Endothelial cell of umbilical vein (primary cell): ENCODE measurements at regions of chr14 and their contacts with region 1.

Region 1: DNA sequence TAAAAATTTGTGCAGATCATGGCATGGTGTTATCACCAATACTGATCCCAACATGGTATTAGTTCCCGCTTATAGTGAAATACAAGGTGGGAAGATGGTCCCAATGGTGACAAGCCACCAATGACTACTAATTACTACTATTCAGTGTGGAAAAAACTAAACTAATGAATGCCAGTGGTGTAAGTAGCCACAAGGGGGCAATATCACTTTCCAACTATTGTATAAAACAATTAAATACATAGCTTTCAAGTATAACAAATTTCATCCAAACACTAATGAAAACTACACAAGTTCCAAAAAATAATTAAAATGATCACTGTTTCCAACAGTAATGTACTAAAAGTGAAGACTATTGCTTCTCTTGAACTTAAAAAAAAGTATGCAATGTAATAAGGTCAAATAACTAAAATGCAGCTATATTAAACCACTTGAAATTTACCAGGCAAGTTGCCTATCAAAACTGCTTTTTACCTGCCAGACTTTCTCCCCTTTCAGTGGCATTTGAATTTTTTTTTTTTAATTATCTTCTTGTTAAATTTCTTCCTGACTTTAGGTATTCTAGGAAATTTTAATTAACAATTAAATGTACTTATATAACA is 58.0 kb downstream of the PAPLN start:
- DNase-seq: peak; percentile 71
- H3K4me3 ChIP-seq: no peak overlapping the region
- H3K27ac ChIP-seq: no peak overlapping the region
- H3K4me1 ChIP-seq: peaks cover 3% of the 10 kb centered on the region
- H3K27me3 ChIP-seq: no peaks in the 10 kb centered on the region
- CTCF ChIP-seq: peak; percentile 48 to 55
- POLR2A ChIP-seq: no peak

Region 2: DNA sequence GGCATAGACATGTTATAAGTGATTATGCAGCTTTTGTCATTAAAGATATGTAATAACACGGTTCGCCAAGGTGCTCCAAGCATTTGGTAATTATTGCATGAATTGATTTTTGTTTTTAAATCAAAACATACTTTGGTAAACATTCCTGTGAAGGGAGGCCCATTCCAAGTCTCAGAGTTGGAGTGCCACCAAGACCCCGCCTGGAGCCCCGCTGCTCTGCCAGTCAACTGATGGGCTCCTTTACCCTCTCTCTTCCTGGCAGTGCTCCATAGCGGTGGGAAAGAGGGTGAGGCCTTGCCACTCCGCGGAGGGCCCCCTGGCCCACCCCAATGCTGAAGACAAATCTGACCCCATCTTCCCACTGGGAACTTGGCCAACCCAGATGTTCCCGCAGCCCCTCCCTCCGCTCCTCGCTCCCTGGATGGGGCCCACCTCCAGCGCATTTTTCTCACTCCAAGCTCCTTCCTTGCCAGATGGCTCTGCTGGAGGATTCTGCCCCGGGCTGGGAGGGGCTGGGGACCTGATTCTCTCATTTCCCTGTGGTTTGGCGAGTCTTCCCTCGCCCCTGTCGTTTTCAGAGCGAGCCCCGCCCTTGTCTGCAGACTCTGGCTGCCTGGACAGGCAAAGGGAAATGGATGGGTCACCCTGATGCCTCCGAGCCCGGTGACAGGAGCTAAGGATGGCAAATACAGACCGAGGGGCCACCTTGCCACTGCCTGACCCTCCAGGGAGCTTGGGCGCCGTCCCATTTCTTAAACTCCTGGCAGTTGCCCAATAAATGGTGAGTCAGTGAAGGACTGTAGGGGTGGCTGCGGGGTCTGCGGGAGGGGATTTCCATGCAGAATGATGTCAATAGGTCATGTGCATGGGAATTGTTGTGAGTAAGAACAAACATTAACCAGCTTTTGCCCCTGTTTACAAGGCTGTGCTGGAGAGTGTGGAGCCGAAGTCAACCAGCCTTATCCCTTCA is 67.2 kb before region 1 on chr14:
- CTCF ChIA-PET with region 1: interaction called, 10 read pairs
- POLR2A ChIA-PET with region 1: no interaction called
- dilution Hi-C with region 1: no loop called
- intact Hi-C with region 1: no loop called
- DNase-seq: peak; percentile 96
- H3K4me3 ChIP-seq: peak overlapping the region in 1 of 3 experiments; percentile 11
- H3K27ac ChIP-seq: peak overlapping the region; percentile 78
- H3K4me1 ChIP-seq: peaks cover 36% of the 10 kb centered on the region
- H3K27me3 ChIP-seq: no peaks in the 10 kb centered on the region
- CTCF ChIP-seq: no peak
- POLR2A ChIP-seq: no peak

Region 3: DNA sequence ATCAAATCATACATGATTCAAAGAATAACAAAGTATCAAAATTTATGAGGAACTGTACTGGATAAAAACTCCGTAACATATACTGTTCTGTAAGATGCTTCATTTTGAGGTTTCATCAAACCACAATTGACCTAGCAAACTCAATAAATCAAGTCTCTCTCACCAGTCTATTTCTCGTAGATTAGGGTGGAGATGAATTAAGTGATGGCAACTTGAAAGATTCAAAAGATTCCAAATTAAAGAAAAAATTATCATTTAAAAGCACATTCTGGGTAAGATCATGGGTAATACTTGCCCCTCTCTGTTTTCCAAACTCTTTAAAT is 16.4 kb after region 1 on chr14:
- CTCF ChIA-PET with region 1: interaction called, 34 read pairs
- POLR2A ChIA-PET with region 1: no interaction called
- dilution Hi-C with region 1: no loop called
- intact Hi-C with region 1: no loop called
- DNase-seq: no peak
- H3K4me3 ChIP-seq: peak overlapping the region in 1 of 3 experiments; percentile 23
- H3K27ac ChIP-seq: peak overlapping the region; percentile 31
- H3K4me1 ChIP-seq: peaks cover 20% of the 10 kb centered on the region
- H3K27me3 ChIP-seq: no peaks in the 10 kb centered on the region
- CTCF ChIP-seq: no peak
- POLR2A ChIP-seq: no peak

Region 4: GRCh38 chr14:73372529-73372928 is 77.2 kb after region 1 on chr14:
- CTCF ChIA-PET with region 1: interaction called, 21 read pairs
- POLR2A ChIA-PET with region 1: interaction called, 3 read pairs
- dilution Hi-C with region 1: no loop called
- intact Hi-C with region 1: no loop called
- DNase-seq: no peak
- H3K4me3 ChIP-seq: no peak overlapping the region
- H3K27ac ChIP-seq: no peak overlapping the region
- H3K4me1 ChIP-seq: no peaks in the 10 kb centered on the region
- H3K27me3 ChIP-seq: no peaks in the 10 kb centered on the region
- CTCF ChIP-seq: no peak
- POLR2A ChIP-seq: no peak

Region 5: DNA sequence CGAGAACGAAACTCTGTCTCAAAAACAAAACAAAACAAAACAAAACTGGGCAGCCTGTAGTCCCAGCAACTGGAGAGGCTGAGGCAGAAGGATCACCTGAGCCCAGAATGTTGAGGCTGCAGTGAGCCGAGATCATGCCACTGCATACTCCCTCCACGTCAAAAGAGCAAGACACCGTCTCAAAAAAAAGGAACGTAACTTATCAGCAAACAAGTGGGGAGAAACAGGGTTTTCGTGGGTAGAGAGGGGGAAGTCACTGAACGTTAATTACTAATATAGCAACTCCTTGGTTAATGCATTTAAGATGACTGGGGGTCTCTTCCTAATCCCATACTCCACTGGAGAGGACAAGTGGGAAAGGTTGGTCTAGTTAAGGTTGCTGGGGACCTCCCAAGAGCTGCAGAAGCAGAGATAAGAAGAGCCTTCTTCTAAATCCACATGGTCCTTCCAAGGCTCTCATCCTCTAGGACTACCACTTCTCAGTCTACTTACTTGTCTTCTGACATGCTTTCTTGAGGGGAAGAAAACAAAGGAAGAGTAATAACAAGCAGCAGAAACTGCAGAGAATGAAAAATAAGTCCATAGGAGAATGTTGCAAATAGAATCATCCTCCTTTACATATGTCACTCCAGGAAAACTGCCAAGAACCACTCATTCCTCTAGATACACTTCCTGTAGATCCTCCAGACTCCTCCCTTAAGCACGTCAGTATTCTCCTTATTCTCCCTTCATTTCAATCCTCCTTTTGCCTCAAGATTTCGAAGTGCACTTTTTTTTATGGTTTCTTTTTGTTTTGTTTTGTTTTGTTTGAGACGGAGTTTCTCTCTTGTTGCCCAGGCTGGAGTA is 157.3 kb after region 1 on chr14:
- CTCF ChIA-PET with region 1: interaction called, 123 read pairs
- POLR2A ChIA-PET with region 1: no interaction called
- dilution Hi-C with region 1: loop called (anchors 25 kb)
- intact Hi-C with region 1: loop called (anchors 5 kb)
- DNase-seq: peak; percentile 78
- H3K4me3 ChIP-seq: no peak overlapping the region
- H3K27ac ChIP-seq: peak overlapping the region; percentile 3
- H3K4me1 ChIP-seq: peaks cover 31% of the 10 kb centered on the region
- H3K27me3 ChIP-seq: no peaks in the 10 kb centered on the region
- CTCF ChIP-seq: no peak
- POLR2A ChIP-seq: no peak

Region 6: DNA sequence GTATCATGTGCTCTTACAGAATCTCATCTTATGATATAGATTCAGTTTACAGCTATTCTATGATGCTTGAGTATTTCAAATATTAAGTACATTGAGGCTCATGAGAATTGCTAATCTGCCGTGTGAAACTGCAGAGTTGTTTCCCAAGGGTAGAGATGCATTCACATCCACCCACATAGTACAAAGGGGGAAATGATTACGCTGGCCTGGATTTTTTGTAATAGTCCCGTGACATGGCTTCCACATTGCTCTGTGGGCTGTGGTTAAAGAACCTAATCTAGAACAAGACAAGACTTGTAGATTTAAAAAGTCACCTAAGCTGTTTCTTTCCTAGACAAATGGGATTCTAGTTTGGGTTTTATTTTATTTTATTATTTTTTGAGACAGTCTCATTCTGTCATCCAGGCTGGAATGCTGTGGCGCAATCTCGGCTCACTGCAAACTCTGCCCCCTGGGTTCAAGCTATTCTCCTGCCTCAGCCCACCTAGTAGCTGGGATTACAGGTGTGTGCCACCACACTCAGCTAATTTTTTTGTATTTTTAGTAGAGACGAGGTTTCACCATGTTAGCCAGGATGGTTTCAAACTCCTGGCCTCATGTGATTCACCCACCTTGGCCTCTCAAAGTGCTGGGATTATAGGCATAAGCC is 182.4 kb after region 1 on chr14:
- CTCF ChIA-PET with region 1: interaction called, 559 read pairs
- POLR2A ChIA-PET with region 1: no interaction called
- dilution Hi-C with region 1: loop called (anchors 25 kb)
- intact Hi-C with region 1: loop called (anchors 1 kb)
- DNase-seq: no peak
- H3K4me3 ChIP-seq: no peak overlapping the region
- H3K27ac ChIP-seq: no peak overlapping the region
- H3K4me1 ChIP-seq: no peaks in the 10 kb centered on the region
- H3K27me3 ChIP-seq: no peaks in the 10 kb centered on the region
- CTCF ChIP-seq: no peak
- POLR2A ChIP-seq: no peak